B cell (primary cell): ENCODE measurements at regions of chr2 and their contacts with region 1.

Region 1: GRCh38 chr2:231604685-231605606 is 12.3 kb downstream of the TEX44 start:
- DNase-seq: peak; percentile 100
- ATAC-seq: peak; percentile 88
- H3K4me3 ChIP-seq: peak overlapping the region in 4 of 5 experiments; percentile 55 to 65 (median 60)
- H3K4me3 Mint-ChIP-seq: peak overlapping the region; percentile 82
- H3K27ac ChIP-seq: peak overlapping the region; percentile 94
- H3K27ac Mint-ChIP-seq: peak overlapping the region; percentile 97
- H3K4me1 ChIP-seq: peaks cover 17 to 25% of the 10 kb centered on the region in 2 donors
- H3K4me1 Mint-ChIP-seq: peaks cover 31% of the 10 kb centered on the region
- H3K27me3 ChIP-seq: no peaks in the 10 kb centered on the region
- H3K27me3 Mint-ChIP-seq: no peaks in the 10 kb centered on the region
- CTCF ChIP-seq: no peak

Region 2: GRCh38 chr2:231227309-231228162 is 377.4 kb before region 1 on chr2:
- CTCF ChIA-PET with region 1: interaction called, 4 read pairs
- POLR2A ChIA-PET with region 1: no interaction called
- intact Hi-C with region 1: loop called (anchors 5 kb)
- DNase-seq: peak; percentile 80
- ATAC-seq: peak; percentile 77
- H3K4me3 ChIP-seq: no peak overlapping the region
- H3K4me3 Mint-ChIP-seq: no peak overlapping the region
- H3K27ac ChIP-seq: no peak overlapping the region
- H3K27ac Mint-ChIP-seq: peak overlapping the region; percentile 69
- H3K4me1 ChIP-seq: peaks cover 18 to 22% of the 10 kb centered on the region in 2 donors
- H3K4me1 Mint-ChIP-seq: peaks cover 23% of the 10 kb centered on the region
- H3K27me3 ChIP-seq: no peaks in the 10 kb centered on the region
- H3K27me3 Mint-ChIP-seq: no peaks in the 10 kb centered on the region
- CTCF ChIP-seq: peak; percentile 85

Region 3: DNA sequence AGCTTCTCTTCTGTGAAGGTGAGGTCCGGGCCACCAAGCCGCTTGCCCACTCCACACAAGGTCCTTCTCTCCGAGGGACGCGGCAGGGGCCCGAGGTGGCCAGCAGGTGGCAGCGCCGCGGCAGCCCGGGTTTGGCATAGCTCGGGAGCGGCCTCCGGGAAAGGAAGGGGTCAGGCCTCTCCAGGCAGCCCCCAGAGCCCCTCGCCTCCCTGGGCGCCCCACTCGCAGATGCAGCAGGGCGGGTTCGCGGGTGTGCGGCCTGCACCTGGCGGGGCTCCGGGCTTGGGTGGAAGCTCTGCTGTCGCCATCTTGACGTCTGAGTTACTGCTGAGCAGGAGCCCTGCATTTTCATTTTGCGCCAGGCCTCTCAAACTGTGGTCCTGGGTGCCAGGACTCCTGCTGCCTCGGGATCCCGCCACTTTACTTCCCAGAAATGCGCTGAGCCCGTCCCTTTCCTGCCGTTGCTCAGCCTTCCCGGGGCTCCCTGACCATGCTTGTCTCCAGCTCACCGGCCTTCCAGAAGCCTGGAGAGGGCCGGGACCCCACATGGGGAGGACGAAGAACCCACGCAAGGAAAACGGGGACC is 122.0 kb before region 1 on chr2:
- CTCF ChIA-PET with region 1: interaction called, 12 read pairs
- POLR2A ChIA-PET with region 1: no interaction called
- intact Hi-C with region 1: no loop called
- DNase-seq: peak; percentile 82
- ATAC-seq: peak; percentile 85
- H3K4me3 ChIP-seq: peak overlapping the region in 4 of 5 experiments; percentile 58 to 65 (median 59)
- H3K4me3 Mint-ChIP-seq: peak overlapping the region; percentile 83
- H3K27ac ChIP-seq: peak overlapping the region; percentile 71 to 75
- H3K27ac Mint-ChIP-seq: peak overlapping the region; percentile 86
- H3K4me1 ChIP-seq: peaks cover 0 to 19% of the 10 kb centered on the region in 2 donors
- H3K4me1 Mint-ChIP-seq: peaks cover 7% of the 10 kb centered on the region
- H3K27me3 ChIP-seq: no peaks in the 10 kb centered on the region
- H3K27me3 Mint-ChIP-seq: no peaks in the 10 kb centered on the region
- CTCF ChIP-seq: peak; percentile 91

Region 4: GRCh38 chr2:231530091-231531011 is 74.6 kb before region 1 on chr2 and contains the start of gene NMUR1:
- CTCF ChIA-PET with region 1: interaction called, 3 read pairs
- POLR2A ChIA-PET with region 1: no interaction called
- intact Hi-C with region 1: loop called (anchors 1 kb)
- DNase-seq: peak; percentile 81
- ATAC-seq: peak; percentile 96
- H3K4me3 ChIP-seq: peak within 1 kb of the TSS in 2 of 5 experiments; percentile 31 to 46
- H3K4me3 Mint-ChIP-seq: peak within 1 kb of the TSS; percentile 49
- H3K27ac ChIP-seq: no peak within 1 kb of the TSS
- H3K27ac Mint-ChIP-seq: no peak within 1 kb of the TSS
- H3K4me1 ChIP-seq: peaks cover 11 to 14% of the 10 kb centered on the region in 2 donors
- H3K4me1 Mint-ChIP-seq: peaks cover 9% of the 10 kb centered on the region
- H3K27me3 ChIP-seq: peaks cover 0 to 28% (median 8%) of the 10 kb centered on the region in 4 experiments
- H3K27me3 Mint-ChIP-seq: peaks cover 28% of the 10 kb centered on the region
- CTCF ChIP-seq: peak; percentile 91
- total RNA-seq, gene NMUR1: 0.10 TPM in 1 of 2 replicates, not detected in the other

Region 5: GRCh38 chr2:231563378-231563961 is 41.5 kb before region 1 on chr2:
- CTCF ChIA-PET with region 1: interaction called, 16 read pairs
- POLR2A ChIA-PET with region 1: no interaction called
- intact Hi-C with region 1: loop called (anchors 1 kb)
- DNase-seq: peak; percentile 37
- ATAC-seq: peak; percentile 62
- H3K4me3 ChIP-seq: no peak overlapping the region
- H3K4me3 Mint-ChIP-seq: no peak overlapping the region
- H3K27ac ChIP-seq: no peak overlapping the region
- H3K27ac Mint-ChIP-seq: no peak overlapping the region
- H3K4me1 ChIP-seq: no peaks in the 10 kb centered on the region
- H3K4me1 Mint-ChIP-seq: no peaks in the 10 kb centered on the region
- H3K27me3 ChIP-seq: no peaks in the 10 kb centered on the region
- H3K27me3 Mint-ChIP-seq: no peaks in the 10 kb centered on the region
- CTCF ChIP-seq: no peak

Region 6: GRCh38 chr2:231627384-231628120 is 22.6 kb after region 1 on chr2:
- CTCF ChIA-PET with region 1: interaction called, 10 read pairs
- POLR2A ChIA-PET with region 1: interaction called, 10 read pairs
- intact Hi-C with region 1: no loop called
- DNase-seq: no peak
- ATAC-seq: no peak
- H3K4me3 ChIP-seq: no peak overlapping the region
- H3K4me3 Mint-ChIP-seq: no peak overlapping the region
- H3K27ac ChIP-seq: no peak overlapping the region
- H3K27ac Mint-ChIP-seq: no peak overlapping the region
- H3K4me1 ChIP-seq: peaks cover 0 to 3% of the 10 kb centered on the region in 2 donors
- H3K4me1 Mint-ChIP-seq: peaks cover 2% of the 10 kb centered on the region
- H3K27me3 ChIP-seq: peaks cover 0 to 4% (median 1%) of the 10 kb centered on the region in 4 experiments
- H3K27me3 Mint-ChIP-seq: no peaks in the 10 kb centered on the region
- CTCF ChIP-seq: no peak

Region 7: DNA sequence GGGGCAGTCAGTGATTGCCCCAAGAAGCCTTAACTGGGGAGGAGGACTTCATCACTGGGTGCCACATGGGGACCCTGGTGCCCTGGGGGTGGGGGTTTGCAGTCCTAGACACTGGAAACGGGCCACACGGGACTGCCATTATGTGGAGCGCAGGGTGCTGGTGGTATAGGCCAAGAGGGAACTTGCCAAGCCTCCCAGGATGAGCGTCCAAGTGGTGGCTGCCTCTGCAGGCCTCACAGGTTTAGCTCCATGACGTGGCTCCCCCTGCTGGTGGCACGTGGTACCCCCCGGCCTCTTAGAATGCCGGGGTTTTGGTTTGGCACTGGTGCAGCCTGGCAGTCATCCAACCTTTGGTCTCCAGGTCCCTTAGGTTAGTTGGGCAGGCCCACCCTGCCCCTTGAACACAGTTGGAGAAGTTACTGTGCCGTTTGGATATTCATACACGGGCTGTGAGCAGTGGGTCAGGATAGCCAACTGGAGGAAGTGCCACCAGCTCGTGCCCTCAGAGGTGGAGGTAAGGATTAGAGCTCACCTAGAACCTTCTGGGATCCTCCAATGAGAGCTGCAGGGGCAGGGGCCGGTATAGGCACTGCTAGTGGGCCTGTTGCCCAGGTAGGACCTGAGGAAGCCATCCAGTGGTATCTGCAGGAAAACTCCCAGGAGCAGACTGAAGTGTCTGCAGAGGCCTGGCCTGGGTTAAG is 108.9 kb after region 1 on chr2:
- CTCF ChIA-PET with region 1: interaction called, 320 read pairs
- POLR2A ChIA-PET with region 1: interaction called, 69 read pairs
- intact Hi-C with region 1: no loop called
- DNase-seq: peak; percentile 90
- ATAC-seq: peak; percentile 18
- H3K4me3 ChIP-seq: no peak overlapping the region
- H3K4me3 Mint-ChIP-seq: peak overlapping the region; percentile 73
- H3K27ac ChIP-seq: peak overlapping the region; percentile 64 to 75
- H3K27ac Mint-ChIP-seq: peak overlapping the region; percentile 91
- H3K4me1 ChIP-seq: peaks cover 49 to 68% of the 10 kb centered on the region in 2 donors
- H3K4me1 Mint-ChIP-seq: peaks cover 66% of the 10 kb centered on the region
- H3K27me3 ChIP-seq: no peaks in the 10 kb centered on the region
- H3K27me3 Mint-ChIP-seq: no peaks in the 10 kb centered on the region
- CTCF ChIP-seq: peak; percentile 95